GM12878 (cell line): ENCODE measurements at regions of chr7 and their contacts with region 1.

Region 1: GRCh38 chr7:77907281-77907680 is 108.7 kb downstream of the PHTF2 start:
- DNase-seq: no peak
- ATAC-seq: no peak
- H3K4me3 ChIP-seq: peak overlapping the region; percentile 29; the same call in 1 of the 2 replicates
- H3K27ac ChIP-seq: peak overlapping the region; percentile 79; the same call in 1 of the 2 replicates
- H3K4me1 ChIP-seq: peaks cover 15% of the 10 kb centered on the region
- H3K27me3 ChIP-seq: no peaks in the 10 kb centered on the region
- CTCF ChIP-seq: no peak
- EP300 ChIP-seq: no peak
- POLR2A ChIP-seq: no peak
- RAD21 ChIP-seq: no peak

Region 2: GRCh38 chr7:77393269-77393668 is 514.0 kb before region 1 on chr7:
- CTCF ChIA-PET with region 1: no interaction called
- POLR2A ChIA-PET with region 1: no interaction called
- RAD21 ChIA-PET with region 1: no interaction called
- SMC1A ChIA-PET with region 1: no interaction called
- in situ Hi-C with region 1: no loop called
- intact Hi-C with region 1: no loop called
- DNase-seq: peak; percentile 85
- ATAC-seq: peak; percentile 92
- H3K4me3 ChIP-seq: no peak overlapping the region
- H3K27ac ChIP-seq: peak overlapping the region; percentile 72
- H3K4me1 ChIP-seq: peaks cover 30% of the 10 kb centered on the region
- H3K27me3 ChIP-seq: no peaks in the 10 kb centered on the region
- CTCF ChIP-seq: no peak
- EP300 ChIP-seq: peak in 1 of 2 experiments; percentile 70; a peak in 2 of 4 replicates
- POLR2A ChIP-seq: no peak
- RAD21 ChIP-seq: 0 out of 2 replicates have a peak, but pooled peaks have one; percentile 3

Region 3: DNA sequence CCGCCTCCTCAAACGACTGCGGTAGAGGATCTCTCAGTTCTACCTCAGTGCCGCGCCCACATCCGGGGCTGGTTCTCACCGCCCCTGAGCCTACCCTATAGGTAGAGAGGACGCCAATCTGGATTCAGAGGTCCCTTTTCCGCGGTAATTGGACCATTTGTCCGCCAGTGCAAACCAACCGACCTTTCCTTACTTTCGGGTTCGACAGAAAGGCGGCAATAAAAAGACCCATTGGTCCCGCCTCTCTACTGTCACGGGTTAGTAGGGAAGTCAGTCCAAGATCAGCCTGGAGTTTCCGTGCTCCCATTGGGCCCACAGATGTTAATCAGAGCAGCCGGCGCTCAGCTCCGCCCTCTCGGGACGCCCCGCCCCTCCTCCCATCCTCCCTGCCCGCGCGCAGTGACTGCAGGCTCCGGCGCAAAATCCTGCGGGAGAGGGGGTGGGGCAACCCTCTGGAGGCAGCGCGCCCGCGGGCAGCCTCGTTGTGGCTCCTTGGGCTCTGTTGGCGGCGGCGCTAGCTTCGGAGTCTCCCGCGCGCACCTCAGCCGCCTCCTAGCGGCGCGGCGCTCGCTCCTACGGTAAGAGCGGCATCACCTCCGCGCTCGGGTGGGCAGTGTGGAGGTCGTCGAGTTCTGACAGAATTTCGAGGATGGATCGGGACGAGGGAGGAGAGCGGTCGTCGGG is 108.7 kb before region 1 on chr7 and contains the starts of genes PHTF2 and TMEM60:
- CTCF ChIA-PET with region 1: interaction called, 9 read pairs
- POLR2A ChIA-PET with region 1: interaction called, 4 read pairs
- RAD21 ChIA-PET with region 1: interaction called, 3 read pairs
- SMC1A ChIA-PET with region 1: interaction called, 7 read pairs
- in situ Hi-C with region 1: no loop called
- intact Hi-C with region 1: loop called (anchors 2 kb)
- DNase-seq: peak; percentile 99
- ATAC-seq: peak; percentile 92
- H3K4me3 ChIP-seq: peak within 1 kb of the TSS; percentile 94
- H3K27ac ChIP-seq: peak within 1 kb of the TSS; percentile 86
- H3K4me1 ChIP-seq: peaks cover 16% of the 10 kb centered on the region
- H3K27me3 ChIP-seq: no peaks in the 10 kb centered on the region
- CTCF ChIP-seq: peak; percentile 37 to 66 (median 50)
- EP300 ChIP-seq: 0 out of 4 replicates have a peak, but pooled peaks of 1 of the 2 experiments have one; percentile 0
- POLR2A ChIP-seq: peak; percentile 76
- RAD21 ChIP-seq: no peak
- polyA plus RNA-seq, gene PHTF2: 12.9 to 14.1 TPM
- polyA plus RNA-seq, gene TMEM60: 75.6 to 94.2 TPM

Region 4: DNA sequence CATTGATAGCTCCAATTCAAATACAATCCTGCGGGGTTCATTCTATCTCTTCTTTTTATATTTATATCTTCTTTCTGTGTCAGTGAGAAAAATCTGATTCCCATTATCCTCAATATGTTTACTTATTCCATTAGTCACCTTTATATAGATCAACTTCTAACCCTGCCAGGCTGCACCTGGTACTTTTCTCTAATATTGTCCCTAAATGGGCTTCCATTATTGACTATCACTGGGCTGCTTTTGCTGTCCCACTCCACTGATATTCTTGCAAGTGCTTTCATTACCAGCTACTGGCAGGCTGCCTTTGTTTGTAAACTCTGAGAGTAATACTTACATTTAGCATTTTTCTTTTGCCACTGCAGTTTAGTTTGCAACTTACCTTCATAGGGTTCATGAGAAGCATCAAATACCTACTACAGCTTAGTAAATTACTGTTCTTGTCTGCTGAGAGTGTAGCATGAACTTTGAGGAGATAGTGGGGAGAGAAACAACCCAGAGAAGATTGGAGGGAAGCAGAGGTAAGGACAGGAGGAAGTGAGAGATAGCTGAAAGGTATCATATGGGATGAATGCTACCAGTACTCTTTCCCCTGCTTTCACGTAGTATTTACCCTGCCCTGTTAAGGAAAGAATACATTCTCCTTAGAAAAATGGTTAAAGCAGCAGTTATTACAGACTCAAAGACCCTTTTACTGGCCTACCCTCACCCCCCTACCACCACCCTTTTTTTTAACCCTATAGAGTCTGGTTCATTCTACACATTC is 10.4 kb after region 1 on chr7:
- CTCF ChIA-PET with region 1: interaction called, 3 read pairs
- POLR2A ChIA-PET with region 1: interaction called, 3 read pairs
- RAD21 ChIA-PET with region 1: no interaction called
- SMC1A ChIA-PET with region 1: interaction called, 19 read pairs
- in situ Hi-C with region 1: no loop called
- intact Hi-C with region 1: no loop called
- DNase-seq: no peak
- ATAC-seq: peak; percentile 46; the same call in 2 of the 3 replicates
- H3K4me3 ChIP-seq: no peak overlapping the region
- H3K27ac ChIP-seq: no peak overlapping the region
- H3K4me1 ChIP-seq: peaks cover 3% of the 10 kb centered on the region; the same call in 1 of the 2 replicates
- H3K27me3 ChIP-seq: no peaks in the 10 kb centered on the region
- CTCF ChIP-seq: no peak
- EP300 ChIP-seq: no peak
- POLR2A ChIP-seq: no peak
- RAD21 ChIP-seq: no peak

Region 5: DNA sequence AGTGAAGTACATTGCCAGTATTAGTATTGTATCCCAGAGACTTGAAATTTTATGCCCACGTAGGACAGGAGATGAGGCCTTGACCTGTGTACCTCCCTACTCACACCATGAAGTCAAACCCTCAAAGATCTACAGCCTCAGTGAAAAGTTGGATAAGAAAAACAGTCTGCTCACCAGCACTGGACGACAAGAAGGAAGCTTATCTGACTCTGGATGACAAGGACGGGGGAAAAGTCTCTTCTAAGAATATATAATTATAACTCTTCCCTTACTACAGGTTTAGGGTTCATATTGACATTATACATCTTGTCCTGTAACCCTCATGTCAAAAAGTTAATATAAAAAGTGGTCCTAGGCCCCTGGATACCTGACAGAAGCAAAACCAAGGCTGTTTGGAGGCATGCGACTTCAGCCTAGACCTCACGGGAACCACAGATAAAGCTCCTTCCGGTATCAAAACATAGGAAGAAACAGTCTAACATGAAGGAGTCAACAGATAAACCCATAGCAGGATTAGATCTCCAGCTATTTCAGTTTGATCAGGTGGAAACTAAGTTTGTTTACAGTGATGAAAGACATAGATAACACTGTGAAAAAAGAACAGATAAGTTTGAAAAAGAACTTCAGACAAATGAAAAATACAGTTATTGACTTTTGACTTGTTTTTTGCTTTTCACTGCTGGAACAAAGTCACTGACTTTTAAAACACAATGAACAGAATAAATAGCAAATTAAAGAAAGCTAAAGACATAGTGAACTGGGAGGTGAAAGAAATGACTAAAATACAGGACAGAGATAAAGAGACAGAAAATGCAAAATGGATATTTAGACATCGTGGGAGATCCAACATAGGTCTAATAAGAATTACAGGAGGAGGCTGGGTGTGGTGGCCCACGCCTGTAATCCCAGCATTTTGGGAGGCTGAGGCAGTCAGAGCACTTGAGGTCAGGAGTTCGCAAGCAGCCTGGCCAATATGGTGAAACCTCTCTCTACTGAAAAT is 37.2 kb after region 1 on chr7:
- CTCF ChIA-PET with region 1: no interaction called
- POLR2A ChIA-PET with region 1: no interaction called
- RAD21 ChIA-PET with region 1: no interaction called
- SMC1A ChIA-PET with region 1: no interaction called
- in situ Hi-C with region 1: no loop called
- intact Hi-C with region 1: no loop called
- DNase-seq: no peak
- ATAC-seq: no peak
- H3K4me3 ChIP-seq: no peak overlapping the region
- H3K27ac ChIP-seq: no peak overlapping the region
- H3K4me1 ChIP-seq: no peaks in the 10 kb centered on the region
- H3K27me3 ChIP-seq: no peaks in the 10 kb centered on the region
- CTCF ChIP-seq: no peak
- EP300 ChIP-seq: no peak
- POLR2A ChIP-seq: no peak
- RAD21 ChIP-seq: no peak

Region 6: GRCh38 chr7:78039790-78040776 is 132.8 kb after region 1 on chr7:
- CTCF ChIA-PET with region 1: no interaction called
- POLR2A ChIA-PET with region 1: no interaction called
- RAD21 ChIA-PET with region 1: no interaction called
- SMC1A ChIA-PET with region 1: no interaction called
- in situ Hi-C with region 1: no loop called
- intact Hi-C with region 1: no loop called
- DNase-seq: no peak
- ATAC-seq: peak; percentile 98
- H3K4me3 ChIP-seq: no peak overlapping the region
- H3K27ac ChIP-seq: no peak overlapping the region
- H3K4me1 ChIP-seq: no peaks in the 10 kb centered on the region
- H3K27me3 ChIP-seq: no peaks in the 10 kb centered on the region; a peak in 2 of 4 replicates
- CTCF ChIP-seq: peak; percentile 81 to 92 (median 85)
- EP300 ChIP-seq: no peak
- POLR2A ChIP-seq: no peak
- RAD21 ChIP-seq: peak; percentile 67